HEK293T (cell line): ENCODE measurements at regions of chr11 and their contacts with region 1.

Region 1: DNA sequence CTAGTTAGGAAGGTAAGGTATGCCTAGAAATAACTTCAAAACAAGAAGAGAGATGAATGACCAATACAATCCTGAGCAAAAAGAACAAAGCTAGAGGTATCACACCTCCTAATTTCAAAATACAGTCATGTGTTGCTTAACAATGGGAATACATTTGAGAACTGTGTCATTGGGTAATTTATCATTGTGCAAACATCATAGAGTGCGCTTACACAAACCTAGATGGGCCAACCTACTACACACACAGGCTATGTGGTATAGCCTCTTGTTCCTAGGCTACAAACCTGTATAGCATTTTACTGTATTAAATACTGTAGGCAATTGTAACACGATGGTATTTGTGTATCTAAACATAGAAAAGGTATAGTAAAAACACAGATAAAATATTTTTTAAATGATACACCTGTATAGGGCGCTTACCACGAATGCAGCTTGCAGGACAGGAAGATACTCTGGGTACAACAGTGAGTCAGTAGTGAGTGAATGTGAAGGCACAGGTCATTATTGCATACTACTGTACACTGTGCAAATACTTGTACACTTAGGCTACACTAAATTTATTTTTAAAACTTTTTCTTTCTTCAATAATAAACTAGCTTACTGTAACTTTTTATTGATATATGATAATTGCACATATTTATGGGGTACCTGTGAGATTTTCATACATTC is 48.2 kb downstream of the STK33 start:
- DNase-seq: no peak

Region 2: GRCh38 chr11:8426076-8426475 is 119.8 kb before region 1 on chr11:
- CTCF ChIA-PET with region 1: no interaction called
- POLR2A ChIA-PET with region 1: no interaction called
- DNase-seq: no peak

Region 3: GRCh38 chr11:9109939-9110731 is 564.3 kb after region 1 on chr11:
- CTCF ChIA-PET with region 1: interaction called, 12 read pairs
- POLR2A ChIA-PET with region 1: no interaction called
- DNase-seq: no peak